T-cell (primary cell): ENCODE measurements at regions of chr19 and their contacts with region 1.

Region 1: DNA sequence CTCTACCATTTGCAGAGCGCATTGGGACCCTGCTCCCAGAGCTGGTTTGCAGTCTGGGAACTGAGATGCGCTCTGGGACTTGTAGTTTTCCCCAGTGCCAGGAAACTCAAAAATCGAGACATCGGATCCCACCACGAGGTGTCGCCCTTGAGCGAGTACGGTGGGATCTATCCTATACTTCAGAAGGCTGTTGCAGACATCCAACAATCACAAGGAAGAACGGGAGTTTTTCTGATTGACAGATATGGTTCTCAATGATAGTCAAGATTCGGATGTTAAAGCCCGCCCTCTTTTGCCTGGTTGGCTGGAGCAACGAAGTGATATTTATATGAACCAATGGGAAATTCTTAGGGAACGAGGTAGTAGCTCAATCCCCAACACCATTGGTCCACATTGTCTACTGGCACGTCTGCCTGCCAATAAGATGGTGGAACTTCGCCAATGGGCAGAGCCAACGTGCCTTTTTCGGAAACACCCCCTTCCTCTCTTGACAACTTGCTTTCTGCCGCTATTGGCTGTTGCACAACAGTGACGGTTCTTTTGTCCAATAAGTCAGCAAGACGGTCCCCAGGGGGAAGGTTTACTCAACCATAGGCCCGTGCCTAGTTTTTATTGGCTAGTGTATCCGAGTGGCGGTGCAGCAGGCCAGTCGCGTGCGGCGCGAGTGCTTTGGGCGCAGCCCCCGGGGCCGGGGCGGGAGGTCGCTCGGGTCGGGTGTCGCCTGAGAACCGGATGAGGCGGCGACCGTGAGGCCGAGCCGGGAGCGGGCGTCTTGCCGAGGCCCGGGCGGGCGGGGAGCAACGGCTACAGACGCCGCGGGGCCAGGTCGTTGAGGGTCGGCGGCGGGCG is at the start of gene DNM2:
- DNase-seq: peak; percentile 93 to 99 (median 97)
- ATAC-seq: peak; percentile 85 to 88 (median 86)
- H3K4me3 ChIP-seq: peak within 1 kb of the TSS; percentile 74 to 83
- H3K4me3 Mint-ChIP-seq: peak within 1 kb of the TSS; percentile 89 to 98 (median 90)
- H3K27ac ChIP-seq: peak within 1 kb of the TSS; percentile 43
- H3K27ac Mint-ChIP-seq: peak within 1 kb of the TSS; percentile 90 to 92
- H3K4me1 ChIP-seq: peaks cover 19 to 57% of the 10 kb centered on the region in 2 experiments
- H3K4me1 Mint-ChIP-seq: peaks cover 32 to 44% (median 38%) of the 10 kb centered on the region in 3 donors
- H3K27me3 ChIP-seq: no peaks in the 10 kb centered on the region
- H3K27me3 Mint-ChIP-seq: no peaks in the 10 kb centered on the region
- total RNA-seq, gene DNM2: 272 to 329 (median 297) TPM

Region 2: DNA sequence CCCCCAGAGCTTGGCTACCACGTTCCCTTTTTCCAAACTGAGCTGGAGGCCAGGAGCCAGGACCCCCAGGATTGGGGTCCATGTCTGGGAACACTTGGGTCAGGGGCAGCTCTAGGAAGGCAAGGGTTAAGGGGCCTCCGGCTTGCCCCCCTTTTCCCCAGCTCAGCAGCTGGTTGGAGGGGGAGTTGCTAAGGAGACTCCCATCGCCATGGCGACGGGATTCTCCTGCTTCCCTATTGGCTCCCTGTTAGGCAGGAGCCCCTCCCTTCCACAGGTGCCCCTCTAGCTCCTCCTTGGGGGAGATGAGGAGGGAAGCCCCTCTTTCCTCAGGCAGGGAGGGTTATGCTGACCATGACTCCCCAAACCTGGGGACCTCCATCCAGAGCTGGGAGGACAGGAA is 263.3 kb before region 1 on chr19:
- CTCF ChIA-PET with region 1: no interaction called
- POLR2A ChIA-PET with region 1: no interaction called
- DNase-seq: no peak
- ATAC-seq: no peak
- H3K4me3 ChIP-seq: no peak overlapping the region
- H3K4me3 Mint-ChIP-seq: no peak overlapping the region
- H3K27ac ChIP-seq: no peak overlapping the region
- H3K27ac Mint-ChIP-seq: no peak overlapping the region
- H3K4me1 ChIP-seq: no peaks in the 10 kb centered on the region
- H3K4me1 Mint-ChIP-seq: peaks cover 0 to 8% (median 0%) of the 10 kb centered on the region in 3 donors
- H3K27me3 ChIP-seq: peaks cover 0 to 21% of the 10 kb centered on the region in 2 experiments
- H3K27me3 Mint-ChIP-seq: peaks cover 3 to 15% of the 10 kb centered on the region in 2 donors

Region 3: DNA sequence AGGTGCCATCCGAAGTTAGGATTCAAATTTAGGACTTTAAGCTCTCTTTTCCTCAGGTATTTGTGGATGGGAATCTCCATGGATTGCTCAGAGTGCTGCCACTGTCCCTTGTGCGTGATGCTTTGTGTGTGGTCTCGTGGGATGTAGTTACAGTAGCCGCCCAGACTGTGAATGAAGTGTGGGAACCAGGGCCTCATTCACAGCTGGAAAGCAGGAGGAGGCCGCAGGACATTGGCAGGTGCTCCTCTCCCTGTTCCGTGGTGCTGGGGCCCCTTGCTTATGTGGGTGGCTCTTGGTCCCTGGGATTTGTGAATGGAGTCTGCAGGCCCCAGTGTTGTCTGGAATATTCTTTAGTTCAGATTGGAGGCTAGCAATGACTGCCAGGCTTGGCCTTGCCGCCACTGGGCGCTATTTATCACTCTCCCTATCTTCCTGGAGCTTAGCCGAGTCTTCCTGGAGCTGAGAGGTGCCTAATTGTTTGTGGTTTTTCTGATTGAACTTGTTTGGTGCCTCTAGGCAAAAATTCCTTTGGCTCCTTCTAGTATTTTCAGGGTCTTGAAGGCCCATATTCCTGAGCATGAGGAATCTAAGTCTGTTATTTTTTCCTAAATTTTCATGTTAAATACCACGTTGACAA is 61.8 kb before region 1 on chr19:
- CTCF ChIA-PET with region 1: no interaction called
- POLR2A ChIA-PET with region 1: no interaction called
- DNase-seq: peak in 1 of 35 experiments; percentile 25
- ATAC-seq: no peak
- H3K4me3 ChIP-seq: peak overlapping the region; percentile 81 to 87
- H3K4me3 Mint-ChIP-seq: peak overlapping the region; percentile 86 to 95 (median 89)
- H3K27ac ChIP-seq: peak overlapping the region; percentile 80
- H3K27ac Mint-ChIP-seq: peak overlapping the region; percentile 55 to 89
- H3K4me1 ChIP-seq: peaks cover 20 to 73% of the 10 kb centered on the region in 2 experiments
- H3K4me1 Mint-ChIP-seq: peaks cover 54 to 65% (median 61%) of the 10 kb centered on the region in 3 donors
- H3K27me3 ChIP-seq: no peaks in the 10 kb centered on the region
- H3K27me3 Mint-ChIP-seq: no peaks in the 10 kb centered on the region

Region 4: GRCh38 chr19:10695401-10696398 is 21.9 kb before region 1 on chr19:
- CTCF ChIA-PET with region 1: interaction called, 4 to 11 read pairs
- POLR2A ChIA-PET with region 1: no interaction called
- DNase-seq: peak; percentile 67 to 93 (median 84)
- ATAC-seq: peak; percentile 90 to 97 (median 96)
- H3K4me3 ChIP-seq: peak overlapping the region; percentile 32 to 52
- H3K4me3 Mint-ChIP-seq: peak overlapping the region; percentile 72 to 84 (median 75)
- H3K27ac ChIP-seq: no peak overlapping the region
- H3K27ac Mint-ChIP-seq: peak overlapping the region; percentile 5 to 56
- H3K4me1 ChIP-seq: peaks cover 2 to 18% of the 10 kb centered on the region in 2 experiments
- H3K4me1 Mint-ChIP-seq: peaks cover 15 to 21% (median 20%) of the 10 kb centered on the region in 3 donors
- H3K27me3 ChIP-seq: peaks cover 0 to 24% of the 10 kb centered on the region in 2 experiments
- H3K27me3 Mint-ChIP-seq: peaks cover 0 to 5% of the 10 kb centered on the region in 2 donors

Region 5: GRCh38 chr19:10760273-10760944 is 42.8 kb after region 1 on chr19:
- CTCF ChIA-PET with region 1: interaction called, 6 to 45 read pairs
- POLR2A ChIA-PET with region 1: interaction called, 3 to 7 read pairs
- DNase-seq: peak in 5 of 35 experiments; percentile 19 to 50 (median 26)
- ATAC-seq: no peak
- H3K4me3 ChIP-seq: peak overlapping the region in 1 of 2 donors; percentile 17
- H3K4me3 Mint-ChIP-seq: peak overlapping the region; percentile 48 to 69 (median 50)
- H3K27ac ChIP-seq: peak overlapping the region; percentile 86
- H3K27ac Mint-ChIP-seq: peak overlapping the region; percentile 83 to 95
- H3K4me1 ChIP-seq: peaks cover 57 to 96% of the 10 kb centered on the region in 2 experiments
- H3K4me1 Mint-ChIP-seq: peaks cover 85 to 87% (median 85%) of the 10 kb centered on the region in 3 donors
- H3K27me3 ChIP-seq: no peaks in the 10 kb centered on the region
- H3K27me3 Mint-ChIP-seq: no peaks in the 10 kb centered on the region

Region 6: DNA sequence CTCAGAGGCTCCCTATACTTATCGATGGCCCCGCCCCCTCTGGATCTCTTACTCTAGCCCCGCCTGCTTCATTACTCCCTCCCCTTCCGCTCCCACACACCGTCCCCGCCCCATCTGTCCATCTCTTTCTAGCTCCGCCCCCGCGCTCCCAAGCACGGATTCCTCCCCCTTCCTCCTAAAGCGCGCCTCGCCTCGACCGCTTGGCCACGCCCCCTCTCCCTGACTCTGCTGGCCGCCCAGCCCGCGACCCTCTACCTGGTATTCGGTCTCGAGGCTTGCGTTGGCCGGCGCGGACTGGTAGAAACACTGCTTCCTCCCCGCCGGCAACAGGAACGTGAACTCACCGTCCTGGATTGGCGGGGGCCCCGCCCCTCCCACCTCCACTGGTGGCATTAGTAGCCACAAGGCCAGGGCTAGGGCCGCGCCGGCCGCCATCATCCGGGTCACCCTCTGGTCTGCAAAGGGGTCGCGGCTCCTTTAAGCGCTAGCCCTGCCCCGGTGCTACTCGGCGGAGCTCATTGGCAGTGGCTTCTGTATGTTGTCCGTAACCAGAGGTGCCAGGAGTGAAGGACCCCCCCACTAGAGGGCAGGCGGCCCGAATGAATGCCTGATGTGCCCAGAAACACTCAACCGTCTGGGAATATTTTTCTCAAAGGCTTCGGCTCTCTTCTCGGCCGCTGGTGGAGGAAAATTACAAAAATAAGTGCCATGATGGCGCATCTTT is 118.3 kb after region 1 on chr19 and contains the start of gene TMED1:
- CTCF ChIA-PET with region 1: interaction called in 1 of 2 experiments, 33 read pairs
- POLR2A ChIA-PET with region 1: no interaction called
- DNase-seq: peak; percentile 85 to 98 (median 94)
- ATAC-seq: peak; percentile 87 to 92 (median 90)
- H3K4me3 ChIP-seq: peak within 1 kb of the TSS; percentile 76 to 95
- H3K4me3 Mint-ChIP-seq: peak within 1 kb of the TSS; percentile 97 to 99 (median 98)
- H3K27ac ChIP-seq: peak within 1 kb of the TSS; percentile 97
- H3K27ac Mint-ChIP-seq: peak within 1 kb of the TSS; percentile 99 to 100
- H3K4me1 ChIP-seq: peaks cover 2 to 25% of the 10 kb centered on the region in 2 experiments
- H3K4me1 Mint-ChIP-seq: peaks cover 12 to 17% (median 16%) of the 10 kb centered on the region in 3 donors
- H3K27me3 ChIP-seq: no peaks in the 10 kb centered on the region
- H3K27me3 Mint-ChIP-seq: no peaks in the 10 kb centered on the region
- total RNA-seq, gene TMED1: 6.1 to 11.4 (median 9.5) TPM

Region 7: GRCh38 chr19:10946964-10947657 is 229.5 kb after region 1 on chr19:
- CTCF ChIA-PET with region 1: interaction called in 1 of 2 experiments, 14 read pairs
- POLR2A ChIA-PET with region 1: no interaction called
- DNase-seq: no peak
- ATAC-seq: no peak
- H3K4me3 ChIP-seq: no peak overlapping the region
- H3K4me3 Mint-ChIP-seq: no peak overlapping the region
- H3K27ac ChIP-seq: no peak overlapping the region
- H3K27ac Mint-ChIP-seq: no peak overlapping the region
- H3K4me1 ChIP-seq: peaks cover 0 to 3% of the 10 kb centered on the region in 2 experiments
- H3K4me1 Mint-ChIP-seq: peaks cover 0 to 4% (median 1%) of the 10 kb centered on the region in 3 donors
- H3K27me3 ChIP-seq: no peaks in the 10 kb centered on the region
- H3K27me3 Mint-ChIP-seq: no peaks in the 10 kb centered on the region